ENCODE measurements at regions of chr7 and their contacts with region 1.

Region 1: GRCh38 chr7:139075031-139075652 is 34.4 kb downstream of the ZC3HAV1 start:
- DNase-seq: peak; percentile 73
- H3K4me3 Mint-ChIP-seq: no peak overlapping the region
- H3K27ac Mint-ChIP-seq: peak overlapping the region; percentile 75
- H3K4me1 Mint-ChIP-seq: peaks cover 52% of the 10 kb centered on the region
- H3K27me3 Mint-ChIP-seq: no peaks in the 10 kb centered on the region

Region 2: GRCh38 chr7:138886501-138886917 is 188.6 kb before region 1 on chr7:
- CTCF ChIA-PET with region 1: interaction called, 20 read pairs
- POLR2A ChIA-PET with region 1: no interaction called
- intact Hi-C with region 1: loop called (anchors 2 kb)
- DNase-seq: peak; percentile 28
- H3K4me3 Mint-ChIP-seq: no peak overlapping the region
- H3K27ac Mint-ChIP-seq: peak overlapping the region; percentile 62
- H3K4me1 Mint-ChIP-seq: peaks cover 15% of the 10 kb centered on the region
- H3K27me3 Mint-ChIP-seq: no peaks in the 10 kb centered on the region

Region 3: GRCh38 chr7:139035586-139036353 is 39.4 kb before region 1 on chr7 and contains the start of gene ZC3HAV1L:
- CTCF ChIA-PET with region 1: interaction called, 12 read pairs
- POLR2A ChIA-PET with region 1: interaction called, 3 read pairs
- intact Hi-C with region 1: no loop called
- DNase-seq: peak; percentile 72
- H3K4me3 Mint-ChIP-seq: peak within 1 kb of the TSS; percentile 81
- H3K27ac Mint-ChIP-seq: peak within 1 kb of the TSS; percentile 70
- H3K4me1 Mint-ChIP-seq: peaks cover 21% of the 10 kb centered on the region
- H3K27me3 Mint-ChIP-seq: no peaks in the 10 kb centered on the region
- total RNA-seq, gene ZC3HAV1L: 11.8 to 14.7 TPM

Region 4: DNA sequence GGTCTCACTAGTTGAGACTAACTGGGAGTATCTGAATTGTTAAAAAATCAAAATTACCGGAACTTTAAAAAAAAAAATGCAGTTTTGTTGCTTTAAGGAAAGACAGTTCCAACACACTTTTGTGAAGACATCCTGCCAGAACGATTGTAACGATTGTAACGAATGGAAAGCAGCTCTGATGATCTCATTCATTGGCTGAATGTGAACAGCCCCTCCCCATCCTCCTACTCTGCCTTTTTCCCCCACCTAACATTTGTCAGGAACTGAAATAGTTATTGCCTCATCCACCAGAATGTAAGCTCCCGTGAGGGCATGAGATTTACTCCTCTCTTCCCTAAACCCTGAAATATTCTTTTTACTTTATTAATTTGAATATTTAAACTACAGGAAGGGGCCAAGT is 16.2 kb before region 1 on chr7:
- CTCF ChIA-PET with region 1: interaction called, 69 read pairs
- POLR2A ChIA-PET with region 1: interaction called, 4 read pairs
- intact Hi-C with region 1: no loop called
- DNase-seq: peak; percentile 0
- H3K4me3 Mint-ChIP-seq: no peak overlapping the region
- H3K27ac Mint-ChIP-seq: peak overlapping the region; percentile 69
- H3K4me1 Mint-ChIP-seq: peaks cover 78% of the 10 kb centered on the region
- H3K27me3 Mint-ChIP-seq: no peaks in the 10 kb centered on the region

Region 5: GRCh38 chr7:139095194-139095659 is 20.1 kb after region 1 on chr7:
- CTCF ChIA-PET with region 1: interaction called, 14 read pairs
- POLR2A ChIA-PET with region 1: interaction called, 4 read pairs
- intact Hi-C with region 1: no loop called
- DNase-seq: peak; percentile 85
- H3K4me3 Mint-ChIP-seq: peak overlapping the region; percentile 71
- H3K27ac Mint-ChIP-seq: peak overlapping the region; percentile 87
- H3K4me1 Mint-ChIP-seq: peaks cover 86% of the 10 kb centered on the region
- H3K27me3 Mint-ChIP-seq: no peaks in the 10 kb centered on the region

Measured in activated CD4-positive, alpha-beta memory T cell treated with anti-CD3 and anti-CD28 coated beads for 36 hours (primary cell).